Vagina (tissue), 2 donors: ENCODE measurements at regions of chr9 and their contacts with region 1.

Region 1: GRCh38 chr9:96327694-96328352 is 25.8 kb upstream of the HSD17B3 start:
- DNase-seq: no peak
- H3K4me3 ChIP-seq: no peak overlapping the region
- H3K27ac ChIP-seq: no peak overlapping the region
- H3K4me1 ChIP-seq: no peaks in the 10 kb centered on the region
- H3K27me3 ChIP-seq: no peaks in the 10 kb centered on the region
- CTCF ChIP-seq: peak; percentile 35 to 89 (median 86)
- POLR2A ChIP-seq: no peak

Region 2: GRCh38 chr9:96350866-96351265 is 23.0 kb after region 1 on chr9:
- intact Hi-C with region 1: no loop called
- DNase-seq: no peak
- H3K4me3 ChIP-seq: no peak overlapping the region
- H3K27ac ChIP-seq: no peak overlapping the region
- H3K4me1 ChIP-seq: no peaks in the 10 kb centered on the region
- H3K27me3 ChIP-seq: no peaks in the 10 kb centered on the region
- CTCF ChIP-seq: no peak
- POLR2A ChIP-seq: no peak

Region 3: GRCh38 chr9:96363175-96363967 is 35.5 kb after region 1 on chr9:
- intact Hi-C with region 1: loop called (anchors 1 kb)
- DNase-seq: no peak
- H3K4me3 ChIP-seq: no peak overlapping the region
- H3K27ac ChIP-seq: no peak overlapping the region
- H3K4me1 ChIP-seq: no peaks in the 10 kb centered on the region
- H3K27me3 ChIP-seq: no peaks in the 10 kb centered on the region
- CTCF ChIP-seq: no peak
- POLR2A ChIP-seq: no peak

Region 4: DNA sequence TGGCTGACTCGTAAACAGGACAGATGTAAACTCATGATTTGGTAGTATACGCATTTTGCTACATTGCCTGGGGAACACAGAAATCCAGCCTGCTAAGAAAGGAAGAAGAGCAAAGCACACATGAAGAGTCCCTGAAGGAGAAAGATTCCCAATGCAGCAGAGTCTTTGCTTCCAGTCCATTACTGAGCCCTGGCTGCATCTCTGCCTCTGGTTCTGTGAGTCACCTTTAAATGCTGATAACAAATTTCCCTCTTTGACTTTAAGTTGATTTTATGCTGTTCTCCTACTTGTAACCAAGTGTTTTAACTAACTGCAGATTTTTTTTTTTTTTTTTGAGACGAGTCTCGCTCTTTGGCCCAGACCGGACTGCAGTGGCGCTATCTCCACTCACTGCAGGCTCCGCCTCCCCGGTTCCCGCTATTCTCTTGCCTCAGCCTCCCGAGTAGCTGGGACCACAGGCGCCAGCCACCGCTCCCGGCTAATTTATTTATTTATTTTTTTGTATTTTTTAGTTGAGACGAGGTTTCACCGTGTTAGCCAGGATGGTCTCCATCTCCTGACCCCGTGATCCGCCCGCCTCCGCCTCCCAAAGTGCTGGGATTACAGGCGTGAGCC is 335.8 kb after region 1 on chr9:
- intact Hi-C with region 1: loop called (anchors 2 kb)
- DNase-seq: no peak
- H3K4me3 ChIP-seq: no peak overlapping the region
- H3K27ac ChIP-seq: no peak overlapping the region
- H3K4me1 ChIP-seq: no peaks in the 10 kb centered on the region
- H3K27me3 ChIP-seq: no peaks in the 10 kb centered on the region
- CTCF ChIP-seq: no peak
- POLR2A ChIP-seq: no peak

Region 5: DNA sequence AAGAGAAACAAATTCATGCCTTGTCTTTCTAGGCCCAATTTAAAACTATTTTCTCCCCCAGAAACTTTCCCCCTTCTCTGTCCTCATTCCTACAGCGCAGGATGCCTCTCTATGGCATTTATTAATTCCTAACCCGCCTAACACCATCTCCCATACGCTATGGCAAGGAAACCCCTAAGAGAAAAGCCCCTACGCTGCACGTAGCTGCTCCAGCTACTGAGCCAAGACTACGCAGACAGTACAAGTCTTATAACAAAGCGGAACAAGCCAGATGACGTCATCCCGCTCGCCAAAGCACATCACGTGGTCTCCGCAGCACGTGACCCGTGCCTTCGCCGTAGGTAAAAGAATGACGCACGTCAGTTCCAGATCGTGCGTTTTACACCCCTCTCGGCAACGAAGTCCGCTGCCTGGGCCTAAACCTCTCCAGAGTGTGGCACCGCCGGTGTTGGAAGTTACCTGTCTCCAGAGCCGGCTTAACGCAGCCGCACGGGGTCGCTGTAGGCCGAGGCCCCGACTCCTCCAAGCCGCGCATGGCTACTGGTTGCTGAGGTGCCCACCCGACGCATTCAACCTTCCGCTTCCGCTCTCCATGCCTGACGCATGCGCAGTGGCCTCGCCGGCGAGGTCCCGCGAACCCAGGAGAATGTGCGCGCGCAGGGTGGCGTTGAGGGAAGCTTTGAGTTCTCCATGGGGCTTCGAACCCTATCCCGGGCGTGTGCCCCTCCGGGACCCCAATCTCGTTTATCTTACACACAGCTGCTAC is 1594.3 kb after region 1 on chr9 and contains the start of gene TRMO:
- intact Hi-C with region 1: no loop called
- DNase-seq: peak; percentile 97 to 99
- H3K4me3 ChIP-seq: peak within 1 kb of the TSS; percentile 46 to 57
- H3K27ac ChIP-seq: peak within 1 kb of the TSS; percentile 89
- H3K4me1 ChIP-seq: peaks cover 33% of the 10 kb centered on the region
- H3K27me3 ChIP-seq: no peaks in the 10 kb centered on the region
- CTCF ChIP-seq: peak in 2 of 3 experiments; percentile 68 to 92
- POLR2A ChIP-seq: peak in 1 of 2 donors; percentile 90
- total RNA-seq, gene TRMO: 27.7 TPM